ENCODE measurements at regions of chr17 and their contacts with region 1.

Region 1: GRCh38 chr17:64357191-64357981 is 33.3 kb downstream of the PECAM1 start:
- DNase-seq: peak in 1 of 2 donors; percentile 53
- H3K4me3 ChIP-seq: no peak overlapping the region
- H3K27ac ChIP-seq: peak overlapping the region; percentile 65 to 83
- H3K4me1 ChIP-seq: peaks cover 10 to 14% of the 10 kb centered on the region in 2 donors
- H3K27me3 ChIP-seq: no peaks in the 10 kb centered on the region
- CTCF ChIP-seq: no peak
- POLR2A ChIP-seq: no peak

Region 2: GRCh38 chr17:64441772-64442540 is 84.6 kb after region 1 on chr17:
- intact Hi-C with region 1: no loop called
- DNase-seq: no peak
- H3K4me3 ChIP-seq: no peak overlapping the region
- H3K27ac ChIP-seq: peak overlapping the region in 1 of 2 donors; percentile 66
- H3K4me1 ChIP-seq: no peaks in the 10 kb centered on the region
- H3K27me3 ChIP-seq: no peaks in the 10 kb centered on the region
- CTCF ChIP-seq: no peak
- POLR2A ChIP-seq: no peak

Region 3: DNA sequence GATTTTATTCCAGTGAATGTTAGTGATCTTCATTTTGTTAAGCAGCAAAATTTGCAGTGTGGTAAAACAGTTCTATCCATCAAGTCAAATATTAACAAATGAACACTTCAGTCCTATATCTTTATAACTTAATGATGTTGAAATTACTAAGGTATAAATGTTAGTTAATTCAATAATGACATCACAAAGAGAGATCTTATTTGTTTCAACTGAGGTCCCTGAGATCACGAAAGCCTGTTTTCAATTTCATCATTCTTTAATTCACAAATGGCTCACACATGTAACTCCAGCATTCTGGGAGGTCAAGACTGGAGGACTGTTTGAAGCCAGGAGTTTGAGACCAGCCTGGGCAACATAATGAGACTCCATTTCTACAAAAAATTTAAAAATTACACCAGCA is 290.8 kb after region 1 on chr17:
- intact Hi-C with region 1: loop called (anchors 5 kb)
- DNase-seq: no peak
- H3K4me3 ChIP-seq: no peak overlapping the region
- H3K27ac ChIP-seq: no peak overlapping the region
- H3K4me1 ChIP-seq: no peaks in the 10 kb centered on the region
- H3K27me3 ChIP-seq: no peaks in the 10 kb centered on the region
- CTCF ChIP-seq: no peak
- POLR2A ChIP-seq: no peak